AG04449 (cell line): ENCODE measurements at regions of chr13 and their contacts with region 1.

Region 1: DNA sequence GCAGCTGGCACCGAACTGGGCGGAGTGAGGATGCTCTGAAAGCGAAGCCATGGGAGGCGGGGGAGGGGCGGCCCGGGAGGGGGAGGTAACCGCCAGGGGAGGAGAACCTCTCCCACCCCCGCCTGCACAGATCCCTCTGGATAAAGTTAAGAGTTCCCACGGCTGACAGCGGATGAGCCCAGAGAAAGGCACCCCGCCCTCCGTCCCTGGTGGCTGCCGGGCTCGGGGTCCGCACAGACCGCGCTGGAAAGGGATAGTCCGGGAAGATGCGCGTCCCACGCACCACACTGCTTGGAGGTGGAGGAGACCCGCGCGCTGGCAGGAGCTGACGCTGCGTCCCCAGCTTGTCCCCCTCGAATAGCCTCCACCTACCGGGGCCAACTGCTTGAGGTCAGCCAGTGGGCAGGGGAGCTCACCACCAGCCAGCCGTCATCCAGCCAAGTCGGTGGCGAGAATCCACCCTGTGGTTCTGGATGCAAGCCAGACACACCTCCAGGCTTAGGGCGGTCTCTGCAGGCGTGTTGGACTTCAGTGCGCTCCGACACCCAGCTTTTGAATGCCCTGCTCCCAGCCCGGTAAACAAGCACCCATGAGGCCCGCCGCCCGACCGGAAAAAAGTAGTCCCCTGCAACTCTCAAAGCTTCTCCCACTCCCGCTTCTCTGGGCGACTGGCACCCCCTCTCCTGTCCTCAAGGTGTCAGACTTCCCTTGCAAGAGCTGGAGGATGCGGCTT is at the start of gene TRPC4:
- DNase-seq: no peak
- H3K4me3 ChIP-seq: peak within 1 kb of the TSS; percentile 86
- CTCF ChIP-seq: peak; percentile 67

Region 2: DNA sequence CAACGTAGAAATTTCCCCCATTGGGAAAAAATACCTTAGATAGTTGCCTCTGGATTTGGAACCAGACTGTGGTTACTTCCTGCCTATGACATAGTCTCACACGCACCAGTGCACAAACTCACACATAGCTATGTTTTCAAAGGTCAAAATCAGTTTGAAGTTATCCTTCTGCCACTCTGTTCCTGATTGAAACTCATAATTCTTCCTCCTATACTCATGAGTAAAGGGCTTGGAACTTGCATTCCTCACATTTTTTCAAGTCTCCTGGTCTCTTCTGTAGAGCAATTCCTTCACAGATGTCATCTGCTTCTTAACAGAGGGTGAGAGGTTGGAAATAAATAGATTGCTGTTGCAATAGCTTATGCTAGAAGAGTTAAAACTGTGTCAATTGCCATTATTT is 252.8 kb before region 1 on chr13:
- CTCF ChIA-PET with region 1: interaction called, 10 read pairs
- POLR2A ChIA-PET with region 1: interaction called, 4 read pairs
- DNase-seq: peak; percentile 91
- H3K4me3 ChIP-seq: no peak overlapping the region
- CTCF ChIP-seq: no peak

Region 3: DNA sequence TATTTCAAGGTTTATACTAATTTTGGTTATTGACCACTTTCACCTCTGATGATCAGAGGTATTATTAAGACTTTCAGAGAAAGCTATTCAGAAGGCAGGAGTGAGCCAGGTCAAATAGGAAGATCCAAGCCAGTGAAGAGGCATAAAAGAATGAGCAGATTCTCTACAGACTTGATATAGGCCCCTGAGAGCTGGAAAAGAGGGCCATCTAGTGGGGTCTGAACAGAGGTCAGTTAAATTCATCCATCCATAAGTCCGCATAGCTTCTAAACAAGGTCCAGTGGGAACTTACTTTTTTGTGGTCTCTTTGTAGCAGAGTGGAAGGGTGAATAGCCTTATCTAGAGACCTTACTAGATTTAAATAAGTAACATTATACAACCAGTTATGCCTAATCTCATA is 353.2 kb after region 1 on chr13:
- CTCF ChIA-PET with region 1: interaction called, 14 read pairs
- POLR2A ChIA-PET with region 1: no interaction called
- DNase-seq: no peak
- H3K4me3 ChIP-seq: no peak overlapping the region
- CTCF ChIP-seq: peak; percentile 33